Activated CD4-positive, alpha-beta memory T cell treated with anti-CD3 and anti-CD28 coated beads, Interleukin-2, amount 10 ng/mL, durations not matched to agents 7 days and 5 days (primary cell): ENCODE measurements at regions of chr17 and their contacts with region 1.

Region 1: DNA sequence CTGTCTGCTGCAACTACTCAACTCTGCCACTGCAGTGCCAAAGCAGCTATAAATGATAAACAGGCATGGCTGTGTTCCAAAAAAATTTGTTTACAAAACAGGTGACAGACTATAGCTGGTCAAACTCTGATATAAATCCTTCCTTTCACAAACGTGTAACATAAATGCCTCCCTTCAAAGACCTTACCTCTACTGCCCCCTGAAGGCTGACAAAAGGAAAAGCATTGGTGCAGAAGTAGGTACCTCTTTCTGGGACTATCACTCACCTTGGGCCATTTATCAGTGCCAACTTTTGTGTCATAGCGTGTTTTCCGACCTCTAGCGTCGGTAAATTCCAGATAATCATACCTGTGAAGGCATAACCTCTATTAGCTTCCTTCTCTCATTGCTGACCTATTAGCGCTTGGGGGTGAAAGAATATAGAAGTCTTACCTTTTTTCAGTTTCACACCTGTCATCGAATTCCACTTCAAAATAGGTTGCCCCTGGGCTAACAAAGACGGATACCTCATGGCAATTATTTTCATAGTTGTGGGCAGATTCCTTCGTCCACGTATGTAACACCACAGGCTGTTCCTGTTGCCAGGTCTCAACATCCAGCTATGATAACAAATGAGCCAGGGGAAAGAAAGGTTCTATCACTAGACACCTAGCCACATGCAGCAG is 67.9 kb downstream of the ZZEF1 start:
- DNase-seq: no peak
- H3K4me3 Mint-ChIP-seq: no peak overlapping the region
- H3K27ac Mint-ChIP-seq: no peak overlapping the region
- H3K4me1 Mint-ChIP-seq: peaks cover 6% of the 10 kb centered on the region
- H3K27me3 Mint-ChIP-seq: no peaks in the 10 kb centered on the region

Region 2: DNA sequence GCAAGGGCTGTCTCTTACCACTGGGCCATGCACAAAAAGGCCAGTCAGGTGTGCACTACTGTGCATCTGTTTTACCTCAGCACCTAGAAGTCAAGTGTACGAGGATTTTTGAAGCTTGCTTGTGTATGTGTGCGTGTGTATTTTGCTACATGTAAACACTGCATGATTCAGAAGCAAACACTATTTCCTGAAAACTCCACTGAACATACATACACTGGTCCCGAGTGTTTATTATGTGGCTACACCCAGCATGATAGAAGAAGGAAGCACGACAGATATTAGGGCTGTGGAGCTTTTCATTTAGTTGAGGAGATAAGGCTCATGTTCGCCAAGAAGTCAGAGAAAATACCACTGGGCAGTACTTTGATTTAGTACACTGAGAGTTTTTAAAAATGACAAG is 21.4 kb before region 1 on chr17:
- CTCF ChIA-PET with region 1: no interaction called
- POLR2A ChIA-PET with region 1: no interaction called
- DNase-seq: no peak
- H3K4me3 Mint-ChIP-seq: no peak overlapping the region
- H3K27ac Mint-ChIP-seq: no peak overlapping the region
- H3K4me1 Mint-ChIP-seq: peaks cover 16% of the 10 kb centered on the region
- H3K27me3 Mint-ChIP-seq: no peaks in the 10 kb centered on the region

Region 3: GRCh38 chr17:4064366-4064765 is 10.6 kb before region 1 on chr17:
- CTCF ChIA-PET with region 1: interaction called, 13 read pairs
- POLR2A ChIA-PET with region 1: interaction called, 3 read pairs
- DNase-seq: no peak
- H3K4me3 Mint-ChIP-seq: no peak overlapping the region
- H3K27ac Mint-ChIP-seq: no peak overlapping the region
- H3K4me1 Mint-ChIP-seq: no peaks in the 10 kb centered on the region
- H3K27me3 Mint-ChIP-seq: no peaks in the 10 kb centered on the region